ENCODE measurements at regions of chr19 and their contacts with region 1.

Region 1: DNA sequence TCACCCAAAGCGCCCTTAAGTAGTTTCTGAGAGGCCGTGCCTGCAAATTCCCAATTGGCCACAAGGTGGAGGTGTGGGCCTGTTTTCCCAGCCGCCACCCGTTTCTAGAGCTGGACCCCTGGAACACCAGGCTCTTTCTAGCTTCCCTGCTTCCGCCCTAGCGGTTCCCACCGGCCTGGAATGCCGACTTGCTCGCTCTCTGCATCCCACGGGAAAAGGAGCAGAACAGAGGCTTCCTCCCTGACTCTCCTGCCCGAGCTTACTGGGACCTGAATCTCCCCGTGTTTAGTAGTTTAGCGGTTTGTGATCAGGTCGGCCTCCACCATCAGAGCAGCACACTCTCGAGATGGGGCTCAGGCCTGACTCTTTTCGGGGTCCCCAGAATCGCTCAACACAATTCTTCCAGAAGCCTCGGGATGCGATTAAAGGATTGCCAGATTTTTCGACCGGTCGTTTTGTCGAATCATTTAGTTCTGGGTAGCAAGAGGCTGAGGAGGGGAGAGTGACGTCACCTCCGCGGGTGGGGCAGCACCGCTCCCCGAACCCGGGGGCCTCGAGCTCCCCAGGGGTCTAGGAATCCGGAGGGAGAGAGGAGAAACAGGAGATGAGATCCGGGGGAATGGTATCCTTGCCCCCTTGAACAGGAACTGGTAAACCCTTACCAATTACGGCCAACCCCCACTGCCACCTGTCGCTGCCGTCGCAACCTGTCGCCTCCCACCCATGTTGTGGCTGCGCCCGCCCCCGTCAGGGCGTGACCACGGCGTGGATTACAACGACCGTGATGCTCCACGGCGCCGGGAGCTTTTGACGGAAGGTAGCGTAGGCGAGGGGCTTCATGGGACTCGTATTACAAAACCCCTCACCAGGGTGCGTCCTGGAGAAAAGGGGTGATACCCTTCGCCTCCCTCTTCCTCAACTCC is 8.0 kb downstream of the NAPSA start:
- DNase-seq: peak; percentile 34
- H3K4me3 ChIP-seq: peak overlapping the region; percentile 16 to 53 (median 17)
- H3K27ac ChIP-seq: no peak overlapping the region
- H3K4me1 ChIP-seq: peaks cover 6% of the 10 kb centered on the region
- H3K27me3 ChIP-seq: no peaks in the 10 kb centered on the region
- CTCF ChIP-seq: peak; percentile 65 to 79

Region 2: GRCh38 chr19:50461066-50461875 is 103.8 kb after region 1 on chr19:
- CTCF ChIA-PET with region 1: interaction called, 3 read pairs
- dilution Hi-C with region 1: no loop called
- in situ Hi-C with region 1: loop called in 1 of 2 experiments (anchors 10 kb)
- intact Hi-C with region 1: loop called (anchors 2 kb)
- DNase-seq: peak; percentile 42
- H3K4me3 ChIP-seq: no peak overlapping the region
- H3K27ac ChIP-seq: no peak overlapping the region
- H3K4me1 ChIP-seq: no peaks in the 10 kb centered on the region
- H3K27me3 ChIP-seq: peaks cover 4% of the 10 kb centered on the region
- CTCF ChIP-seq: peak; percentile 86 to 90

Region 3: GRCh38 chr19:50481351-50482149 is 124.1 kb after region 1 on chr19:
- CTCF ChIA-PET with region 1: no interaction called
- dilution Hi-C with region 1: loop called (anchors 5 kb)
- in situ Hi-C with region 1: no loop called
- intact Hi-C with region 1: loop called (anchors 1 kb)
- DNase-seq: no peak
- H3K4me3 ChIP-seq: no peak overlapping the region
- H3K27ac ChIP-seq: no peak overlapping the region
- H3K4me1 ChIP-seq: peaks cover 7% of the 10 kb centered on the region
- H3K27me3 ChIP-seq: no peaks in the 10 kb centered on the region
- CTCF ChIP-seq: no peak

Measured in mammary epithelial cell (primary cell).